ENCODE measurements at regions of chr12 and their contacts with region 1.

Region 1: DNA sequence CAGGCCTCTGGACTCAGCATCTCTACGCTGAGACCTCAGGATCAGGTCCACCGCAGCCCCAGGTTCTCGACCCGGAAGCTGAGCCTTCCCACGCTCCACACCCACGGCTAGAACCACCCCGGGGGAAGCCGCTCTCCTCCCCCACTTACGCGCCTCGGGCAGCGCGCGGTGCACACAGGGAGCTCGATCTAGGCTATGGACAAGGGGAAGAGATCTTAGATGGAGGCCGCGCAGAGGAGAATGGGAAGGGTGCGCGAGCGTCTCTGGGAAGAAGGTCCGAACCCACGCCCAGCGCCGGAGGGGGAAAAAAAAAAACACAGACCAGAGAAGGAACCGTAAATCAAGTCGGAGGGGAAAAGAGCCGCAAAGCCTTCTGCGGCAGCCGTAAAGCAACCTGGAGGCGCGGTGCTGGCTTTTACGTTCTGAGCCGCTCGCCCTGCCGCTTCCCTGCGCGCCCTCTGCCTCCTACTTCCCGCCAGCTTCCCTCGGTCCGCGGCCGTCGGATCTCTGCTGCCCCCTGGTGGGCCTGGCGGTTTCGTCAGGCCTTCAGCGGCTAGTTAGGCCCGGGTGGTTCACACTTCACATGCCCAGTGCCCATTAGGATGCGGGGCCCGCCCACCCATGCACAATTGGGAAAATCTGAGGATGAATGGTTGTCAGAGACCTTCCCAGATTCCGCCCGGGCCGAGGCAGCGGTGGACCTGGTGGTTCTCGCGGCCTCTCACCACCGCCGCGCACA is at the start of gene RAD52:
- DNase-seq: peak; percentile 98
- ATAC-seq: peak; percentile 84
- H3K4me3 Mint-ChIP-seq: peak within 1 kb of the TSS; percentile 98
- H3K27ac Mint-ChIP-seq: peak within 1 kb of the TSS; percentile 87
- H3K4me1 Mint-ChIP-seq: peaks cover 30% of the 10 kb centered on the region
- H3K27me3 Mint-ChIP-seq: no peaks in the 10 kb centered on the region
- total RNA-seq, gene RAD52: 14.6 to 21.8 TPM

Region 2: DNA sequence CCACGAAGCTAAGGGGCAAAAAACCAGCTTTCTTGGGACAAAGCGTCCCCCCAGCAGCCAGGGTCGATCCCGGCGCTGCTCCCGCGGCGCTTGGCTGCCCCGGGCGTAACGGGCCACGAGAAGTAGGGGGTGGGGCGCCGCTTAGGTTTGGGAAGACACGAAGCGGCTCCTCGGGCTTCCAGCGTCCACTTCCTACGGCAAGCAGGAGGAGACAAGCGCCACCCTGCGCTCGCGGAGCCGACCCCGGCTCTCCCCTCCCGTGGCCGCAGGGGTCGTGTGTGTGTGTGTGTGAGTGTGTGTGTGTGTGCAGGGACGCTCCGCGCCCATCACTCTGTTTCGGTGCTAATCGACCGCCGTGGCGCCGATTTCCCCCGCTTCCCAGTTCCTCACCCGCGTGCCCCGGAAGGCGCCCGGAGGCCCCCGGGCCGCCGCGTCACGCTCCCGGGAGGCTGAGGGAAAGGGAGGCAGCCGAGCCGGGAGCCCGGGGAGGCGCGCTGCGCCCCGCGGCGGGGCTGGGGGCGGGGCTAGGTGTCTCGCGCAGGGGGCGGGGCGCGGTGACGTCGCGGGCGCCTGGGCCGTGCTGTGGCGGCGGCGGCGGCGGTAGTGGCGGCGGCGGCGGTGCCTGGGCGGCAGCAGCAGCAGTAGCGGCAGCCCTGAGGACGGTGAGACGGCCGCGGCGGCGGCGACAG is 41.2 kb after region 1 on chr12 and contains the start of gene ERC1:
- CTCF ChIA-PET with region 1: interaction called, 25 read pairs
- DNase-seq: peak; percentile 77
- ATAC-seq: peak; percentile 88
- H3K4me3 Mint-ChIP-seq: peak within 1 kb of the TSS; percentile 91
- H3K27ac Mint-ChIP-seq: peak within 1 kb of the TSS; percentile 87
- H3K4me1 Mint-ChIP-seq: peaks cover 32% of the 10 kb centered on the region
- H3K27me3 Mint-ChIP-seq: peaks cover 14% of the 10 kb centered on the region
- total RNA-seq, gene ERC1: 18.8 to 25.2 TPM